WTC11 (cell line): ENCODE measurements at regions of chr19 and their contacts with region 1.

Region 1: GRCh38 chr19:47713046-47714021 is at the start of gene EHD2:
- DNase-seq: peak; percentile 72
- ATAC-seq: peak; percentile 81
- H3K4me3 Mint-ChIP-seq: peak within 1 kb of the TSS; percentile 66
- H3K27ac Mint-ChIP-seq: no peak within 1 kb of the TSS
- H3K4me1 Mint-ChIP-seq: 0 out of 2 replicates have a peak, but pooled peaks cover 7% of the 10 kb centered on the region
- H3K27me3 Mint-ChIP-seq: peaks cover 22% of the 10 kb centered on the region
- CTCF ChIP-seq: peak; percentile 97
- total RNA-seq, gene EHD2: 11.8 to 15.5 TPM (median 15.4 TPM) in 3 replicates

Region 2: DNA sequence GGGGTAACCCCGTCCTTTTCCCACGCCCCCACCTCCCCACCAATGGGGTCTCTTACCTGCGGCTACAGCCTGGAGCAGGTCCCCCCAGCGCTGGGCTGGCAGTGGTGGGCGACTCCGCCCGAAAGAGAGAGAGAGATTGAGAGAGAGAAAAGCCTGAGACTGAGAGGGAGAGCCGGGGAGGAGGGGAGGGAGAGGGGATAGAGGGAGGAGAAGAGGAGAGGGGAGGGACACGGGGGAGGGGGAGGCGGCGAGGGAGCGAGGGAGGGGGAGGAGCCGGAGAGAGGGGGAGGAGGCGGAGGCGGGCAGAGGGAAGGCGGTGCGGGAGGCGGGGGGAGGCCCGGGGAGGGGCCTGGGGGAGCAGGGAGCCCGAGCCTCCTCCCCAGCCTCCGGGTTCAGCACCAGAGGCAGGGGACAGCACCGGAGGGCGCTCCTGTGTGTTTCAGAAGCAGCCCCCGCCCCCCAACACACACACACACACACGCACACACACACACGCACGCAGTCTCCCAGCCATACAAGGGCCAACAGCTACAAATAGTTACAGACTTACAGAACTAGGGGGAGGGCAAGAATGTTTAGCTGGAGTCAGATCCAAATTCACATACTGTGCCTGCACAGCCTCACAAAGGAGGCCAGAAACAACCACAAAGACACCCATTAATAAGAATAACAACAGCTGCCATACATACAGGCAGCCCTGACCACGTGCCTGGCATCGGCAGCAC is 241.4 kb before region 1 on chr19 and contains the start of gene SLC8A2:
- CTCF ChIA-PET with region 1: interaction called, 11 read pairs
- POLR2A ChIA-PET with region 1: no interaction called
- DNase-seq: peak; percentile 91
- ATAC-seq: peak; percentile 65
- H3K4me3 Mint-ChIP-seq: peak within 1 kb of the TSS; percentile 84
- H3K27ac Mint-ChIP-seq: peak within 1 kb of the TSS; percentile 16; the same call in 1 of the 2 replicates
- H3K4me1 Mint-ChIP-seq: peaks cover 34% of the 10 kb centered on the region
- H3K27me3 Mint-ChIP-seq: peaks cover 18% of the 10 kb centered on the region
- CTCF ChIP-seq: no peak
- total RNA-seq, gene SLC8A2: 6.5 to 8.5 TPM (median 6.8 TPM) in 3 replicates

Region 3: GRCh38 chr19:47523473-47523872 is 189.9 kb before region 1 on chr19:
- CTCF ChIA-PET with region 1: interaction called, 12 read pairs
- POLR2A ChIA-PET with region 1: no interaction called
- DNase-seq: no peak
- ATAC-seq: no peak
- H3K4me3 Mint-ChIP-seq: no peak overlapping the region
- H3K27ac Mint-ChIP-seq: no peak overlapping the region
- H3K4me1 Mint-ChIP-seq: peaks cover 5% of the 10 kb centered on the region; the same call in 1 of the 2 replicates
- H3K27me3 Mint-ChIP-seq: peaks cover 8% of the 10 kb centered on the region
- CTCF ChIP-seq: no peak

Region 4: GRCh38 chr19:47652285-47652684 is 61.0 kb before region 1 on chr19:
- CTCF ChIA-PET with region 1: no interaction called
- POLR2A ChIA-PET with region 1: no interaction called
- DNase-seq: no peak
- ATAC-seq: no peak
- H3K4me3 Mint-ChIP-seq: no peak overlapping the region
- H3K27ac Mint-ChIP-seq: no peak overlapping the region
- H3K4me1 Mint-ChIP-seq: peaks cover 11% of the 10 kb centered on the region
- H3K27me3 Mint-ChIP-seq: no peaks in the 10 kb centered on the region
- CTCF ChIP-seq: no peak

Region 5: GRCh38 chr19:47670736-47671135 is 42.6 kb before region 1 on chr19:
- CTCF ChIA-PET with region 1: no interaction called
- POLR2A ChIA-PET with region 1: no interaction called
- DNase-seq: no peak
- ATAC-seq: no peak
- H3K4me3 Mint-ChIP-seq: no peak overlapping the region
- H3K27ac Mint-ChIP-seq: no peak overlapping the region; the same call in none of the 2 replicates
- H3K4me1 Mint-ChIP-seq: peaks cover 15% of the 10 kb centered on the region
- H3K27me3 Mint-ChIP-seq: no peaks in the 10 kb centered on the region
- CTCF ChIP-seq: no peak

Region 6: DNA sequence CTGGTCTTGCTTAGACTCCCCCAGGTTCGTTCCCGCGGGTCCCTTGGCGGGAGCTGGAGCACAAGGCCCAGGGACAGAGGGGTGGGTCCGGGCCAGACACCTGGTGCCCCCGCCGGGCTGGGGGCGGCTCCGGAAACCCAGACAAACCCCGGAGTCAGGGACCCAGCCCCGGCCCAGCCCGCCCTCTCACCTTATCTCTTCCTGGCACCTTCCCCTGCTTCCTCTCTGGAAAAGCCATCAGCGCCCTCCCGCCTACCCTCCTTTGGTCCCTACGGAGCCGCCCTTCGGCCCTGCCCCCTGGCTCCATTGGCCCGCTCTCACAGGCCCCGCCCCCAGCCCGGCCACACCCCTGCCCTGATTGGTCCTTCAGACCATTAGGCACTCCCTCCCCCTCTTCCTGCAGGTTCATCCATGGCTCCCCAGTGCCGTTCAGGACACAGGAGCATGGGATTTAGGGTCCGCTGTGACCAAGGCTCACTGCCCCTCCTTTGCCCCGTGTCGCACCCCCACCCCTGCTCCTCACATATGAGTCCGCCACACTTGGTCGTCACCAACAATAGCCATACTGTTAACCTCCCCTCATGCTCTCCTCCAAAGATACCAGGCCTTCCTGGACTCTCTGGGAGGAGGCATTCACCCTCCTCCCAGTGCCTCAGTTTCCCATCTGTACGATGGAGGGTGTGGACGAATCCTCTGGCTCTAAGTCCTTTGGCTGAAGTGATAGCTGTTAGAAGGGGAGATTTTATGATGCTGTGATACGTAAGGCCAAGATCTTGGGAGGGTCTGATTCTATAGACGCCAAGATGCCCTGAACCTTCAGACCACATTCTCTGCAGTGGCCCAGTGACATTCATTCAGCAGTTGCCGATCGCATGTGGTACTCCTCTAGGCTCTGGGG is 16.9 kb after region 1 on chr19:
- CTCF ChIA-PET with region 1: interaction called, 102 read pairs
- POLR2A ChIA-PET with region 1: no interaction called
- DNase-seq: peak; percentile 95
- ATAC-seq: peak; percentile 94
- H3K4me3 Mint-ChIP-seq: peak overlapping the region; percentile 91
- H3K27ac Mint-ChIP-seq: peak overlapping the region; percentile 74; the same call in 1 of the 2 replicates
- H3K4me1 Mint-ChIP-seq: peaks cover 13% of the 10 kb centered on the region
- H3K27me3 Mint-ChIP-seq: no peaks in the 10 kb centered on the region; the same call in 1 of the 2 replicates
- CTCF ChIP-seq: no peak

Region 7: GRCh38 chr19:47765523-47766358 is 52.4 kb after region 1 on chr19:
- CTCF ChIA-PET with region 1: interaction called, 29 read pairs
- POLR2A ChIA-PET with region 1: no interaction called
- DNase-seq: peak; percentile 88
- ATAC-seq: peak; percentile 79
- H3K4me3 Mint-ChIP-seq: no peak overlapping the region
- H3K27ac Mint-ChIP-seq: peak overlapping the region; percentile 85
- H3K4me1 Mint-ChIP-seq: peaks cover 22% of the 10 kb centered on the region
- H3K27me3 Mint-ChIP-seq: no peaks in the 10 kb centered on the region
- CTCF ChIP-seq: peak; percentile 80